Activated CD4-positive, alpha-beta memory T cell treated with anti-CD3 and anti-CD28 coated beads, Interleukin-2, amount 10 ng/mL, durations not matched to agents 7 days and 5 days (primary cell): ENCODE measurements at regions of chr6 and their contacts with region 1.

Region 1: DNA sequence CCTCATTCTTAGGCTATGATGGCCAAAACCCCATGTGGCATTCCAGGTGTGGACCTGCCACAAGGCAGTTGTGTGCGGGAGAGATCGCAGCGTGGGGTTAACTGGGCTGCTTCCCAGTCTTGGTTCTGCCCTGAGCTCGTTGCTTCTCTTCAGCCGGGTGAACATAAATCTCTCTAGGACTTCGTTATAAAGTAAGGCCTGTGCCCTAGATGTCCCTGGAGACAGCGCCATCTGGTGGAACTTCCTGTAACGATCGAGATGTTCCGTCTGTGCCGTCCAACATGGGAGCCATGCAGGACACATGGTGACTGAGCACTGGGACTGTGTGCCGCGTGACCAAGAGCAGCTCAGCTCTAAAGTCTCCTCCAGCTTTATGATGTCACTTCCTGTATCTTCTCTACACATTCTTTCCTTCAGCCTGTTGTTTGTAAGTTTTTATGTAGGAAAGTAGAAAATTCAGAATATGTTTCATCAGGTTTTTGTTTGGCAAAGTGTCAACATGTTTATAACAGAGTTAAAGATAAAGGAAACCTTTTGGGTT is 26.8 kb upstream of the RPP40 start:
- DNase-seq: peak; percentile 79
- H3K4me3 Mint-ChIP-seq: no peak overlapping the region
- H3K27ac Mint-ChIP-seq: no peak overlapping the region
- H3K4me1 Mint-ChIP-seq: peaks cover 9% of the 10 kb centered on the region
- H3K27me3 Mint-ChIP-seq: peaks cover 6% of the 10 kb centered on the region

Region 2: GRCh38 chr6:4914420-4915159 is 116.1 kb before region 1 on chr6:
- CTCF ChIA-PET with region 1: no interaction called
- POLR2A ChIA-PET with region 1: no interaction called
- DNase-seq: no peak
- H3K4me3 Mint-ChIP-seq: no peak overlapping the region
- H3K27ac Mint-ChIP-seq: no peak overlapping the region
- H3K4me1 Mint-ChIP-seq: peaks cover 12% of the 10 kb centered on the region
- H3K27me3 Mint-ChIP-seq: no peaks in the 10 kb centered on the region

Region 3: DNA sequence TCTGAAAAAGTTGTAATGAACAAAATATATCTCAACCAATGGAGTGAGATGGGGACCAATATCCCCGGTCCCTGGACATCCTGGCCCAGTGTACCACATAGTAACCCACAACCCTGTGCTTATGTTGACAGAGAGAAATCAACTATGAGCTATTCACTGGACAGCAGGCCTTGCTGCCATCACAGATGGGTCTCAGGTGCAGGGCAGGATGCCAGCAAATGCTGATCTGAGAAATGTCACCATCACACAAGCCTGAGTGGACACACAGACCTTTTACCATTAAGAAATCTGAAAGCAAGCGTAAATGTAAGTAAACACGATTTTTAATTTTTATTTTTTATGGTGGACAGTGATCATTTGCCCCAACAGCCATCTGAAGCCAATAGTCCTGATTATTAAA is 35.9 kb before region 1 on chr6:
- CTCF ChIA-PET with region 1: no interaction called
- POLR2A ChIA-PET with region 1: no interaction called
- DNase-seq: no peak
- H3K4me3 Mint-ChIP-seq: no peak overlapping the region
- H3K27ac Mint-ChIP-seq: no peak overlapping the region
- H3K4me1 Mint-ChIP-seq: no peaks in the 10 kb centered on the region
- H3K27me3 Mint-ChIP-seq: no peaks in the 10 kb centered on the region

Region 4: GRCh38 chr6:5020142-5020541 is 10.5 kb before region 1 on chr6:
- CTCF ChIA-PET with region 1: interaction called, 16 read pairs
- POLR2A ChIA-PET with region 1: no interaction called
- DNase-seq: no peak
- H3K4me3 Mint-ChIP-seq: no peak overlapping the region
- H3K27ac Mint-ChIP-seq: no peak overlapping the region
- H3K4me1 Mint-ChIP-seq: no peaks in the 10 kb centered on the region
- H3K27me3 Mint-ChIP-seq: peaks cover 12% of the 10 kb centered on the region

Region 5: DNA sequence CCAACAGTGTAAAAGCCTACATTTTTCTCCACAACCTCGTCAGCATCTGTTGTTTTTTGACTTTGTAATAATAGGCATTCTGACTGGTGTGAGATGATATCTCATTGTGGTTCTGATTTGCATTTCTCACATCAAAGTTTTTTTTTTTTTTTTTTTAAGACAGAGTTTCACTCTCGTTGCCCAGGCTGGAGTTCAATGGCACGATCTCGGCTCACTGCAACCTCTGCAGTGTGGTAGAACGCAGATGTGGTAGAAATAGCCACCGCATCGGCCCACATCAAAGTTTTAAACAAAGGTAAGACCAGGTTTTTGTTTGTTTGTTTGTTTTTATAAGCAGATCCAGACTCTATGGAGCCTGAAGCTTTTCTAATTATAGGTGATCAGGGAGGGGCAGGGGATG is 41.8 kb after region 1 on chr6:
- CTCF ChIA-PET with region 1: no interaction called
- POLR2A ChIA-PET with region 1: no interaction called
- DNase-seq: no peak
- H3K4me3 Mint-ChIP-seq: no peak overlapping the region
- H3K27ac Mint-ChIP-seq: no peak overlapping the region
- H3K4me1 Mint-ChIP-seq: peaks cover 6% of the 10 kb centered on the region
- H3K27me3 Mint-ChIP-seq: peaks cover 11% of the 10 kb centered on the region